GM12878 (cell line): ENCODE measurements at regions of chr1 and their contacts with region 1.

Region 1: DNA sequence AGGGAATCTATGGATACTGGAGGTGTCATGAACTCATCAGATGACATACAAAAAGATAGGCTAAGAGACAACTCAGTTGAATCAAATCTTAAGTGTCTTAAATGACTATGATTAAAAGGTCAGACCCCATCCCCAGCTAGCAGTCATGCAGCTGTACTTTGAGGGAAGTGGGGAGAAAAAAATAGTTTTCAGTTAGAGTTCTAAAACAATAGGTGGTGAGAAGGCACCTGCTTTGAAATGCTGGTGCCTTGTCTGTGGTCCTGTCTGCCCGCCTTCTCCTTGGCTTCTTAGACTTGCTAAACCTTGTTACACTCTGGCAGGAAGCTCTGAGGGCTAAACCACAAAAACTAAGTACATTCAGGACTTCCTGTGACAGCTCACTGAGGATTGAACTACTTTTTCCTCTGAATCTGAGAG is 15.3 kb downstream of the CD2 start:
- DNase-seq: peak; percentile 68
- ATAC-seq: peak; percentile 80
- H3K4me3 ChIP-seq: peak overlapping the region; percentile 6; the same call in 1 of the 2 replicates
- H3K27ac ChIP-seq: peak overlapping the region; percentile 40; the same call in 1 of the 2 replicates
- H3K4me1 ChIP-seq: peaks cover 21% of the 10 kb centered on the region
- H3K27me3 ChIP-seq: no peaks in the 10 kb centered on the region
- CTCF ChIP-seq: no peak
- EP300 ChIP-seq: 0 out of 4 replicates have a peak, but pooled peaks of 1 of the 2 experiments have one; percentile 39
- POLR2A ChIP-seq: no peak
- RAD21 ChIP-seq: no peak; the same call in 1 of the 2 replicates

Region 2: DNA sequence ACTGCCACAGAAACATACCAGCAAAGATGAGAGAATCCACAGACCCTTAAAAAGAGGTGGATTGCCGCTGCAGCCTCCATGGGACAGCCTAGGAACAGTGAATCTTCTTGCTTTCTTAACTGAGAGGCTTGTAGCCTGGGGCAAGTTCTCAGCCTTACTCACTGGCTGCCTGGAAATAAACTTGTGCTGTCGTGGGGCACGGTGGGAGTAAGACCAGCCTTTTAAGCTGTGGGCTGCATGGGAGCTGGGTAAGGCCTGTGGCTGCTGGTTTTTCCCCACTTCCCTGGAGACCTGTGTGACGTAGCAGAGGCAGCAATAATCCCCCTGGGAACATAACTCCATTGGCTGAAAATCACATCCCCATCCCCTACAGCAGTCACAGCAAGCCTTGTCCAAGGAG is 15.4 kb after region 1 on chr1:
- CTCF ChIA-PET with region 1: interaction called, 12 read pairs
- POLR2A ChIA-PET with region 1: interaction called, 6 read pairs
- RAD21 ChIA-PET with region 1: interaction called, 8 read pairs
- SMC1A ChIA-PET with region 1: interaction called, 24 read pairs
- in situ Hi-C with region 1: no loop called
- intact Hi-C with region 1: no loop called
- DNase-seq: no peak
- ATAC-seq: peak; percentile 70
- H3K4me3 ChIP-seq: no peak overlapping the region
- H3K27ac ChIP-seq: no peak overlapping the region
- H3K4me1 ChIP-seq: no peaks in the 10 kb centered on the region
- H3K27me3 ChIP-seq: no peaks in the 10 kb centered on the region
- CTCF ChIP-seq: no peak
- EP300 ChIP-seq: no peak
- POLR2A ChIP-seq: no peak
- RAD21 ChIP-seq: no peak

Region 3: GRCh38 chr1:116806245-116806644 is 36.7 kb after region 1 on chr1:
- CTCF ChIA-PET with region 1: interaction called, 14 read pairs
- POLR2A ChIA-PET with region 1: interaction called, 4 read pairs
- RAD21 ChIA-PET with region 1: interaction called, 15 read pairs
- SMC1A ChIA-PET with region 1: interaction called, 21 read pairs
- in situ Hi-C with region 1: no loop called
- intact Hi-C with region 1: no loop called
- DNase-seq: peak; percentile 76
- ATAC-seq: peak; percentile 81
- H3K4me3 ChIP-seq: no peak overlapping the region
- H3K27ac ChIP-seq: no peak overlapping the region
- H3K4me1 ChIP-seq: peaks cover 5% of the 10 kb centered on the region
- H3K27me3 ChIP-seq: no peaks in the 10 kb centered on the region
- CTCF ChIP-seq: no peak
- EP300 ChIP-seq: no peak
- POLR2A ChIP-seq: no peak
- RAD21 ChIP-seq: no peak

Region 4: DNA sequence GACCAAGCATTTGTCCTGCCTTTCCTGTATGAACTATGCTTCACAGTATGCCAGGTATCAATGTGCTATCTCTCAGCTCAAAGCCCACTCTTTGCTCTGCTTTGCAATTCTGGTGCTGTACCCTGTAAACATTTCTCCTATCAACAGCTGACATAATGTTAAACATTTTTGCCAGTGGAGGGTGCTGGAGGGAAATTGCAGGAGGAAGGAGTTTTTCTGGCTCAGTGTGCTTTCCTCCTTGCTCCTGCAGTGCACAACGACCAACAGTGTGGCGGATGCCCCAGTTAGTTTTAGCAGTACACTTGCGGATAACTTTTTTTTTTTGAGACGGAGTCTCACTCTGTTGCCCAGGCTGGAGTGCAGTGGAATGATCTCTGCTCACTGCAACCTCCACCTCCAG is 73.1 kb after region 1 on chr1:
- CTCF ChIA-PET with region 1: interaction called, 3 read pairs
- POLR2A ChIA-PET with region 1: interaction called, 6 read pairs
- RAD21 ChIA-PET with region 1: interaction called, 9 read pairs
- SMC1A ChIA-PET with region 1: interaction called, 11 read pairs
- in situ Hi-C with region 1: no loop called
- intact Hi-C with region 1: no loop called
- DNase-seq: no peak
- ATAC-seq: no peak; the same call in 2 of the 3 replicates
- H3K4me3 ChIP-seq: no peak overlapping the region
- H3K27ac ChIP-seq: no peak overlapping the region
- H3K4me1 ChIP-seq: peaks cover 2% of the 10 kb centered on the region; the same call in 1 of the 2 replicates
- H3K27me3 ChIP-seq: no peaks in the 10 kb centered on the region
- CTCF ChIP-seq: no peak
- EP300 ChIP-seq: no peak
- POLR2A ChIP-seq: no peak
- RAD21 ChIP-seq: no peak

Region 5: DNA sequence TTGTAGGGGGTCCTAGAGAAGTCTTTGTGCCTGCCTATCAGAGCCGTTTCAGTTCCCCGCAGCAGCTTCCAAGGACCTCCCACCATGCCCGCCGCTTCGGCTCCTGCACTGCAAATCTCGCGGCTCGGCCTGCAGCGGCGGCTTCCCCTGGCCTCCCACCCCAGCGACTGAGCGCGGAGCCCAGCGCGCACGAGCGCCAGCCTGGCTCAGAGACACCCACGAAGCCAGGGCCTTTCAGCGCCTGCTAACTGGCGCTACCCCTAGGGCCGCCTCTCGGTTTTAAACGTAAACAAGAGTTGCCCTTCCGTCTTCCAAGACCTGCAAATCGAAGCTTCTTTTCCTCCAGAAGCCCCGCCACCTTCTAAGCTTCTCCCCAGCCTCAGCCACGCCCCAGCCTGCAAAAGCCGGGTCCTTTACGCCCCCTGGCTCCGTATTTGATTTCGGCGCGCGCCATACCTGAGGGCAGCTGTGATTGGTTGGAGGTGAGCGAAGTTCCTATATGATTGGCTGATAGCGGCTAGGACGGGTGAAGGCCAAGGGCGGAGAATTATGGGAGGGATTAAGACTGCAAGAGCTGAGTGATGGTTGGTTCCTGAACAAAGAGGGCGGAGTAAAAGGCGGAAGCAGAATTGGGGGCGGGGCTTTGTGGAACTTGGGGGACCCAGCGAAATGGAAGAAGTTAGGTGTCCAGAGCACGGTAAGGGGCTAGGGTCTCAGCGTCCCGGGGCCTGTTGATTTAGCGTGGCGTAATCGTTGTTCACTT is 290.3 kb after region 1 on chr1 and contains the start of gene TTF2:
- CTCF ChIA-PET with region 1: interaction called, 3 read pairs
- POLR2A ChIA-PET with region 1: interaction called, 4 read pairs
- RAD21 ChIA-PET with region 1: interaction called, 12 read pairs
- SMC1A ChIA-PET with region 1: interaction called, 7 read pairs
- in situ Hi-C with region 1: no loop called
- intact Hi-C with region 1: no loop called
- DNase-seq: peak; percentile 99
- ATAC-seq: peak; percentile 86
- H3K4me3 ChIP-seq: peak within 1 kb of the TSS; percentile 84
- H3K27ac ChIP-seq: peak within 1 kb of the TSS; percentile 90
- H3K4me1 ChIP-seq: peaks cover 4% of the 10 kb centered on the region
- H3K27me3 ChIP-seq: no peaks in the 10 kb centered on the region
- CTCF ChIP-seq: peak in 1 of 3 experiments; percentile 26; a peak in 1 of 6 replicates
- EP300 ChIP-seq: peak in 1 of 2 experiments; percentile 40; a peak in 1 of 4 replicates
- POLR2A ChIP-seq: peak; percentile 85
- RAD21 ChIP-seq: no peak
- polyA plus RNA-seq, gene TTF2: 17.7 to 20.8 TPM

Region 6: GRCh38 chr1:117118137-117118536 is 348.6 kb after region 1 on chr1:
- CTCF ChIA-PET with region 1: no interaction called
- POLR2A ChIA-PET with region 1: no interaction called
- RAD21 ChIA-PET with region 1: no interaction called
- SMC1A ChIA-PET with region 1: no interaction called
- in situ Hi-C with region 1: no loop called
- intact Hi-C with region 1: no loop called
- DNase-seq: no peak
- ATAC-seq: no peak
- H3K4me3 ChIP-seq: no peak overlapping the region
- H3K27ac ChIP-seq: no peak overlapping the region
- H3K4me1 ChIP-seq: no peaks in the 10 kb centered on the region
- H3K27me3 ChIP-seq: no peaks in the 10 kb centered on the region
- CTCF ChIP-seq: no peak
- EP300 ChIP-seq: no peak
- POLR2A ChIP-seq: no peak
- RAD21 ChIP-seq: no peak